Activated T-helper 2 cell treated with anti-CD3 and anti-CD28 coated beads, Interferon-gamma antibody, Interleukin-2, Interleukin-4, amounts not matched to agents 10 μg/mL and 5 μg/mL and 100 μg/mL, durations not matched to agents 14 hours and 24 hours and 36 hours (primary cell): ENCODE measurements at regions of chr12 and their contacts with region 1.

Region 1: GRCh38 chr12:27472604-27473003 is 26.1 kb downstream of the SMCO2 start:
- DNase-seq: no peak
- H3K4me3 Mint-ChIP-seq: no peak overlapping the region
- H3K27ac Mint-ChIP-seq: no peak overlapping the region
- H3K4me1 Mint-ChIP-seq: peaks cover 26% of the 10 kb centered on the region
- H3K27me3 Mint-ChIP-seq: peaks cover 5% of the 10 kb centered on the region

Region 2: GRCh38 chr12:27396216-27396815 is 76.3 kb before region 1 on chr12:
- intact Hi-C with region 1: no loop called
- DNase-seq: no peak
- H3K4me3 Mint-ChIP-seq: no peak overlapping the region
- H3K27ac Mint-ChIP-seq: no peak overlapping the region
- H3K4me1 Mint-ChIP-seq: no peaks in the 10 kb centered on the region
- H3K27me3 Mint-ChIP-seq: no peaks in the 10 kb centered on the region

Region 3: GRCh38 chr12:27498149-27498548 is 25.5 kb after region 1 on chr12:
- intact Hi-C with region 1: loop called (anchors 2 kb)
- DNase-seq: peak; percentile 21
- H3K4me3 Mint-ChIP-seq: peak overlapping the region; percentile 15
- H3K27ac Mint-ChIP-seq: peak overlapping the region; percentile 90
- H3K4me1 Mint-ChIP-seq: peaks cover 60% of the 10 kb centered on the region
- H3K27me3 Mint-ChIP-seq: peaks cover 10% of the 10 kb centered on the region

Region 4: GRCh38 chr12:27511031-27511722 is 38.6 kb after region 1 on chr12:
- intact Hi-C with region 1: no loop called
- DNase-seq: no peak
- H3K4me3 Mint-ChIP-seq: no peak overlapping the region
- H3K27ac Mint-ChIP-seq: no peak overlapping the region
- H3K4me1 Mint-ChIP-seq: no peaks in the 10 kb centered on the region
- H3K27me3 Mint-ChIP-seq: peaks cover 60% of the 10 kb centered on the region